Activated CD4-positive, alpha-beta memory T cell treated with anti-CD3 and anti-CD28 coated beads for 36 hours (primary cell): ENCODE measurements at regions of chr9 and their contacts with region 1.

Region 1: DNA sequence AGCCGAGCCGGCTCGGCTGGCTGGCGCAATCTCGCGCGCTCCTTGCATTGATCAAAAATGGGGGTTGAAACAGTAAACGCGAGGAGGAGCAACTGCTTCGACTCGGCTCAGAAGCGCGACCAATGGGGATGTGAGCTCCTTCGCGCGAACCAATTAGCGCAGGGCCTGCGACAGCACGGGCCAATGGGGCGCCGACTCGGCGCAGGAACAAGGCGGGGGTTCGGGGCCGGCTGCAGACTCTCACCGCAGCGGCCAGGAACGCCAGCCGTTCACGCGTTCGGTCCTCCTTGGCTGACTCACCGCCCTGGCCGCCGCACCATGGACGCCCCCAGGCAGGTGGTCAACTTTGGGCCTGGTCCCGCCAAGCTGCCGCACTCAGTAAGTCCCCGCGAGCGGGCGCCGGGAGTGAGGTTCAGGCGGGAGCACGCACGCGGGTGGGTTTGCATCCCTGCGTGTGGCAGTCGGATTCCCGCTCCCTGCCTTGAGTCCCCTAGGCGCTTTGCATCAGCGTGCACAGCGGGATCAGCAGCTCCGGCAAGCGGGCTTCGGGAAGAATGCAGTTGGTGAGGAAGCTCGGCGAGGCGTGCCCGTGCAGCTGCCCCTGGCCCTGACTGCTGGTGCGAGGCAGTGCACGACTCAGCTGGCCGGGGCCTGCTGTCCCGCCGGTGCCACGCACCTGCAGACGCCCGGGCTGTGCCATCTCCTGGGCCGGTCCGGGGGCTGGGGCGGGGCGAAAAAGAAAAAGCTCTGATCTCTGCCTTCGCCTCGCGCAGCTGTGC is at the start of gene PSAT1:
- DNase-seq: peak; percentile 96
- H3K4me3 Mint-ChIP-seq: peak within 1 kb of the TSS; percentile 89
- H3K27ac Mint-ChIP-seq: peak within 1 kb of the TSS; percentile 87
- H3K4me1 Mint-ChIP-seq: peaks cover 44% of the 10 kb centered on the region
- H3K27me3 Mint-ChIP-seq: no peaks in the 10 kb centered on the region
- total RNA-seq, gene PSAT1: 132 to 137 TPM

Region 2: GRCh38 chr9:78235756-78236538 is 61.1 kb before region 1 on chr9 and contains the start of gene CEP78:
- CTCF ChIA-PET with region 1: no interaction called
- POLR2A ChIA-PET with region 1: interaction called, 19 read pairs
- intact Hi-C with region 1: loop called (anchors 1 kb)
- DNase-seq: peak; percentile 93
- H3K4me3 Mint-ChIP-seq: peak within 1 kb of the TSS; percentile 94
- H3K27ac Mint-ChIP-seq: peak within 1 kb of the TSS; percentile 91
- H3K4me1 Mint-ChIP-seq: peaks cover 31% of the 10 kb centered on the region
- H3K27me3 Mint-ChIP-seq: no peaks in the 10 kb centered on the region
- total RNA-seq, gene CEP78: 40.1 to 42.2 TPM

Region 3: GRCh38 chr9:78261403-78262001 is 35.6 kb before region 1 on chr9:
- CTCF ChIA-PET with region 1: interaction called, 3 read pairs
- POLR2A ChIA-PET with region 1: no interaction called
- intact Hi-C with region 1: loop called (anchors 1 kb)
- DNase-seq: no peak
- H3K4me3 Mint-ChIP-seq: no peak overlapping the region
- H3K27ac Mint-ChIP-seq: no peak overlapping the region
- H3K4me1 Mint-ChIP-seq: no peaks in the 10 kb centered on the region
- H3K27me3 Mint-ChIP-seq: no peaks in the 10 kb centered on the region